Vagina (tissue), 2 donors: ENCODE measurements at regions of chr9 and their contacts with region 1.

Region 1: GRCh38 chr9:128043467-128043868 is 23.7 kb downstream of the NAIF1 start:
- DNase-seq: no peak
- H3K4me3 ChIP-seq: no peak overlapping the region
- H3K27ac ChIP-seq: peak overlapping the region; percentile 21
- H3K4me1 ChIP-seq: peaks cover 23% of the 10 kb centered on the region
- H3K27me3 ChIP-seq: no peaks in the 10 kb centered on the region
- CTCF ChIP-seq: no peak
- POLR2A ChIP-seq: no peak

Region 2: DNA sequence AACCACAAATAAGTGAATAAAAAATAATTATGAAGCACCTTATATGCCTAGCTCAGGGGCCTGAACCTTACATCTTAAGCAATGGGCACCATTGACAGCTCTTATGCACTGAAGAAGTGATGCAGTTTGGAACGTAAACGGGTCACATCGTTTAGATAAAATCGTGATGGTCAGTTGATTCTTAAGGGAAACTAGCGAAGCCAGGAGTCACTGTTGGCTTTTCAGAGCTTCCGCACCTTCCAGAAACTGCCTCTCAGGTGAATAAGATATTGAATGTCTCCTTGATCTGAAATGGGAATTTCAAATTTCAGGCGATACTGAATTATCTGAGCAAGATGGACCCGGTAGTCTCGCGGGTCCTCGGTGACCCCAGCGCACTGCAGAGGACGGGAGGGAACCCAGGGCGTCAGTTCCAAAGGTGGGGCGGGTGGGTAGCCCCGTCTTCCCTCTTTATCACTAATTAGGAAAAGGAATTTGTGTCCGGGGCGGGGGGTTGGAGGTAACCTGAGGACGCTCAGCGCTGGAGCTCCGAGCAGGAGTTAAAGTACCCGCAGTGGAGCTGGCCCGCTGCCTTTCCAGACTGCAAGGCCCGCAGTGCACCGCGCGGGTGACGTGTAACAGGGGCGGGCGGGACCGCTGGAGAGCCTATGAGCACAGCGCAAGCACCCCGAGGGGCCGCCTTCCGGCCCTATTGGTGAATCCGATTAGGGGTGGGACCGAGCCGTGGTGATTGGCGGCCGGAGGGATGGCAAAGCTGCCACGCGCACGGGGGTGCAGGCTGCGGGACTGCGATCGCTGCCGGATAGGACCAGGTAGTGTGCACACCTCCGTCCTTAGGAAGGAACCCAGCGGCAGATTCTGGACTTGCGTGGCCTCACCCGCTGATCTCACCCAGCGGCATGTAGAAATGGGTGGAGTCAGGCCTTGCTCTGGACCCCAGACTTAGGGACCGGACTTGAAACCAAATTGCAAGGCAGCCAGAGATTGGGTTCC is 798.6 kb before region 1 on chr9:
- intact Hi-C with region 1: no loop called
- DNase-seq: peak in 1 of 2 donors; percentile 94
- H3K4me3 ChIP-seq: peak overlapping the region; percentile 57
- H3K27ac ChIP-seq: peak overlapping the region; percentile 79
- H3K4me1 ChIP-seq: peaks cover 15% of the 10 kb centered on the region
- H3K27me3 ChIP-seq: no peaks in the 10 kb centered on the region
- CTCF ChIP-seq: no peak
- POLR2A ChIP-seq: peak in 1 of 2 donors; percentile 42

Region 3: DNA sequence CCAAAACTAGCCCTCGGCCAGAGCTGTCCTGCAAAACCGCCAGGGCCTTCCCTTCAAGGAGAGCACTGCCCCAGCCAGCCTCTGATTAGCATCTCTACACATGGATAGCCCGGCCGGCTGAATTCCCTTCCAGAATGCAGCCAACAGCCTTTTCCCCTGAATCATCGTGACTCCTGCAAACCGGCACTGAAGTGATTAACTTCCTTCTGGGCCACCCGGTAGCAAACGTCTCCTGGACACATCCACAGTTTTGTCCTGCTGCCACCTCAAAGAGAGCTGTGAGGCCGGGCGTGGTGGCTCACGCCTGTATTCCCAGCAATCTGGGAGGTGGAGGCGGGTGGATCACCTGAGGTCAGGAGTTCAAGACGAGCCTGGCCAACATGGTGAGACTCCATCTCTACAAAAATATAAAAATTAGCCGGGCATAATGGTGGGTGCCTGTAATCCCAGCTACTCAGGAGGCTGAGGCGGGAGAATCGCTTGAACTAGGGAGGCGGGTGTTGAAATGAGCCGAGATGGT is 41.6 kb before region 1 on chr9:
- intact Hi-C with region 1: no loop called
- DNase-seq: no peak
- H3K4me3 ChIP-seq: no peak overlapping the region
- H3K27ac ChIP-seq: peak overlapping the region; percentile 40
- H3K4me1 ChIP-seq: peaks cover 9% of the 10 kb centered on the region
- H3K27me3 ChIP-seq: no peaks in the 10 kb centered on the region
- CTCF ChIP-seq: no peak
- POLR2A ChIP-seq: no peak

Region 4: DNA sequence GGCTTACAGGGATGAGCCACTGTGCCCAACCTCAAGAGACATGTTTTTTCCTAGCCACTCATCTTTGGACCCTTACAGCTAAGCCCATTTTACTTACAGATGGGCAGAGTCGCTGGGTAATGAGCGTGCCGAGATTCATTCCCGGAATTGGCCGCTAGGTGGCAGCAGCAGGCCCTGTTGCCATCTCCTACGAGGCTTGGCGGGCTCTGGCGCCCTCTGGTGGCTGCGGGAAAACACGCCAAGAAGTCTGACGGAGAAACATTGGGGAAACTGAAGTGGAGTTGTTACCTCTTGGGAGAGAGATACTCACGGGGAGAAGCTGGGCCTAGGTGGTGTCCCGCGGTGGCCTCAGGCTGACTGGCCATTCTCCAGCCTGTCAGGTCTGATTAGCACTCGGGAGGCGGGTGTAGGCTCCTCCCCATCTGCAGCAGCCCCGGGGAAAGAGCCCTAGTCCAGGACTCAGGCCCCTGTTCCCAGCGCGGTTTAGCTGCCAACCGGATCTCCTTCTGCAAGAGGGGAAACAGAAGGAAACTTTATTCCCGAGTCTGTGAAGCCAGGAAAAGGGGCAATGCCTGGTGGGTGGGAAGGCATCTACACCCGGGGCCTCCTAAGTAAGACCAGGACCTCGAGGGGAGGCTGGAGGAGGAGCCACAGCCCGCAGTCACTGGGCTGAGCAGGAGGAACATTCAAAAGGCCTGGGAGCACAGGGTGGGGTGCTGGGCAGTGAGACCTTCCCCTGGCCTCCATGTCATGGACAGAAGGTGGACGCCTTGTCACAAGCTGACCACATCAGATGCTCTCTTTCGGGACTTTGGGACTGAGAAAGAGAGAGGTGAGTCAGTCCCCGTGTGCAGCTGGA is 74.4 kb after region 1 on chr9:
- intact Hi-C with region 1: loop called (anchors 5 kb)
- DNase-seq: no peak
- H3K4me3 ChIP-seq: no peak overlapping the region
- H3K27ac ChIP-seq: peak overlapping the region; percentile 51
- H3K4me1 ChIP-seq: peaks cover 4% of the 10 kb centered on the region
- H3K27me3 ChIP-seq: no peaks in the 10 kb centered on the region
- CTCF ChIP-seq: peak; percentile 98 to 100 (median 100)
- POLR2A ChIP-seq: no peak